Adrenal gland (tissue), 19 donors: ENCODE measurements at regions of chr10 and their contacts with region 1.

Region 1: GRCh38 chr10:103069453-103070331 is 123.4 kb downstream of the NT5C2 start:
- DNase-seq: peak; percentile 53 to 87 (median 75)
- H3K4me3 ChIP-seq: no peak overlapping the region
- H3K27ac ChIP-seq: no peak overlapping the region
- H3K4me1 ChIP-seq: no peaks in the 10 kb centered on the region
- H3K27me3 ChIP-seq: no peaks in the 10 kb centered on the region
- CTCF ChIP-seq: peak; percentile 34 to 77 (median 68)
- POLR2A ChIP-seq: no peak

Region 2: DNA sequence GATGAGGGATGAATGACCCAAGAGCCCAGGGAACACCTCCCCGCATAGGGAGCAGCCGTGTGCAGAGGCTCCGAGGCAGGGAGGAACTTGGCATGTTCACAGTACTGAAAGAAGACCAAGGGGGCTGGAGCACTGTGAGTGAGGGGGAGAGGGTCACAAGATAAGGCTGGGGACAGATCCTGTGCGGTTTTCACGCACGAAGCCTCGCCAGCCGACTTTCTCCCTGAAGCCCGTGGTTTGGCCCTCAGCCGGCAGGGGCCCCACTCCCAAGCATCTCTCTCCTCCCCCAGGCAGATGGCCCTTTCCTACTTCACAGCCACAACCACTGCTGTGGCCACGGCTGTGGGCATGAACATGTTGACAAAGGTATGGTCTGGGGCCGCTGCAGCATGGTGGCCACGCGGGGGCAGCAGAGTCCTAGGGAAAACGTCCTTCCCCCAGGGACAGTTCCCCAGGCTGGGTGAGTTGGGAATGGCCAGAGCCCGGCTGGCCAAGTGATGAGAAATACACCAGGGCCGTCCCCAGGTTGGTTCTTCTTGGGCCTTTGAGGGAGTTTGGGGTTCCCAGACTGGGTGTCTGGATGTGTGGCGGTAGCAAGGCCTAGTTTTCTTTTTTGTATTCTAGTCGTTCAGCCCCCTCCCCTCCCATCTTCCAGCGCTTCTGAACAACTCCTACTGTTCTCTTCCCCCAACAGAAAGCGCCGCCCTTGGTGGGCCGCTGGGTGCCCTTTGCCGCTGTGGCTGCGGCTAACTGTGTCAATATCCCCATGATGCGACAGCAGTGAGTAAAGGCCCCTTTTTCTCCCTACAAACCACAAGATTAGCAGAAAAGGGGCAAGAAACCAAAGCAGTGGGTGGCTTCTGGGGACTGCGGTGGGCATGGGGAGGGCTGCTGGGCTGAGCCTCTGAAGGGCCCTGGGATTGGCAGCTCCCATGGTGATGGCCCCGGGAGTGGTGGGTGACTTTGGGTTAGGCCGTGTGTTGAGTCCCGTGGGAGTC is 340.4 kb before region 1 on chr10:
- intact Hi-C with region 1: loop called in 1 of 2 experiments (anchors 10 kb)
- DNase-seq: peak; percentile 89 to 96 (median 93)
- H3K4me3 ChIP-seq: no peak overlapping the region
- H3K27ac ChIP-seq: peak overlapping the region in 1 of 5 donors; percentile 49
- H3K4me1 ChIP-seq: peaks cover 0 to 25% of the 10 kb centered on the region in 2 donors
- H3K27me3 ChIP-seq: no peaks in the 10 kb centered on the region
- CTCF ChIP-seq: peak; percentile 88 to 98 (median 94)
- POLR2A ChIP-seq: no peak

Region 3: DNA sequence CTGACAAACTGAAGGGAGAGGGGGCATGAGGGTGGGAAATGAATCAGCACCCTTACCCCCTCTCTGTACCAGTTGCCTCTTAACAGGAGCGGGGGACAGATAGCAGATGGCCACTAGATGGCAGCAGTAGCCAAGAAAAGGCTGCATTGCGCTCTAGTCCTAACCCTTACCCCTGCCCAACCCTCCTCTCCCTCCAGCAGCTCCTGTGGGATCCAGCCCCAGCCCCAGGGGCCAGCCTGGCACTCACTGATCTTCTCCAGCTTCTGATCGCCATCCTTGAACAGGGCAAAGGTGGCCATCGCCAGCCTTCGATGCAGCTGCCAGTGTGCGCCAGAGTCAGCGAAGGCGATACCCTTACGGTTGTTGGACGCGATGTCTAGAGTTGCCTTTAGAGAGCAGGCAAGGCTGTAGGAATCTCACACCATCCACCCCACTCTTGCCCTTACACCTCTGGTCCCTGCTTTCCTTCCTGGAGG is 234.6 kb before region 1 on chr10:
- intact Hi-C with region 1: loop called (anchors 10 kb)
- DNase-seq: peak; percentile 77 to 90 (median 81)
- H3K4me3 ChIP-seq: peak overlapping the region; percentile 12 to 69 (median 44)
- H3K27ac ChIP-seq: peak overlapping the region; percentile 59 to 92 (median 87)
- H3K4me1 ChIP-seq: peaks cover 0 to 10% of the 10 kb centered on the region in 2 donors
- H3K27me3 ChIP-seq: no peaks in the 10 kb centered on the region
- CTCF ChIP-seq: peak; percentile 45 to 92 (median 76)
- POLR2A ChIP-seq: peak; percentile 2 to 38

Region 4: DNA sequence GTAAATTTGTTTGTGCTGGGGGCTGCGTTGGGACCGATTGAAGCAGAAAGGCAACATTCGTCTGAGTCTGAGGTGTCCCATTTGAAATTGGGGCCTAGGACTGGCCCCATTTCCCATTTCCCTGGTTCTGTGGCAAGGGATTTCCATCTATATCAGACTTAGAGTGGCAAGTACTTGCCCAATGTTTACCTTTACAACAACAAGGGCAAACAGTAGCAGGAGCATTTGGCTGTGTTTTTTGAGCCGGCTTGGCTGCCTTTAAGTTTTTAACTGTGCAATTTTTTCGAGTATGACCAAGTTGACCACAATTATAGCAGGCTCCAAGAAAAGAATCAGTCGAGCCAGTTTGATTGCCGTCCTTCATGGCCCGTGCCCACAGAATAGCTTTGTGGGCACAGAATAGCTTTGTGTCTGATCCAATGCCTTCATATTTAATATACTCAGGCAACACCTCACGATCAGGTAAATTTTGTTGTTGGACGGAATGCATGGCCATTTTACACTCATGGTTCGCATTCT is 227.8 kb before region 1 on chr10:
- intact Hi-C with region 1: loop called (anchors 10 kb)
- DNase-seq: peak in 1 of 7 donors; percentile 29
- H3K4me3 ChIP-seq: no peak overlapping the region
- H3K27ac ChIP-seq: no peak overlapping the region
- H3K4me1 ChIP-seq: no peaks in the 10 kb centered on the region
- H3K27me3 ChIP-seq: no peaks in the 10 kb centered on the region
- CTCF ChIP-seq: no peak
- POLR2A ChIP-seq: no peak

Region 5: GRCh38 chr10:102917962-102918816 is 151.5 kb before region 1 on chr10 and contains the start of gene CNNM2:
- intact Hi-C with region 1: loop called (anchors 5 kb)
- DNase-seq: peak; percentile 100
- H3K4me3 ChIP-seq: peak within 1 kb of the TSS; percentile 44 to 88 (median 77)
- H3K27ac ChIP-seq: peak within 1 kb of the TSS; percentile 54 to 93 (median 89)
- H3K4me1 ChIP-seq: peaks cover 22 to 51% of the 10 kb centered on the region in 2 donors
- H3K27me3 ChIP-seq: no peaks in the 10 kb centered on the region
- CTCF ChIP-seq: peak in 1 of 6 experiments; percentile 1
- POLR2A ChIP-seq: peak; percentile 61 to 79
- total RNA-seq, gene CNNM2: 15.9 to 52.0 (median 40.7) TPM

Region 6: DNA sequence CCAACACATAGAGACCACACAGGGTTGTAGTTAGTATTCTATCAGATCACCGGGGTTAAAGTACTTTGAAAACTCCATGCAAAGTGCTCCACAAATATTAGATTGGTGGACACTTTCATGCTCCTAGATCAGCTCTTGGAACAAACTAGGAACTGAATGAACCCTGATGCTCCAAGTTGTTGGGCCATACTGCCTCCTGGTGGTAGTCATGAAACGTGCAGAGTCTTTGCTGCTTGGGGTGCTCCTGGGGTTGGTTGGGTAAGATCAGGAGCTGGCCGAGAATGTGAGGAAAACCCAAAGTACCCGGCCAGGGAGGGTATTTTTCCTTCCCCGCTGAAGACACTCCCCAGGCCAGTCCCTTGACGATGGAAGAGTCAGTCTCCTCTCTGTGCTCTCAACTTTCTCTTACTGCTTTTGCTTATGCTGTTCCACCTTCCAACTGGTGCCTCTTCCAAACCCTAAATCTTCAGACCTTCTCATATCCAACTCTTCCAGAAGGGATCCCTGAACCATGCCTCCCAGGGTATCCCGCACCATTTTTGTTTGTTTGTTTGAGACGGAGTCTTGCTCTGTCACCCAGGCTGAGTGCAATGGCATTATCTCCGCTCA is 175.1 kb after region 1 on chr10:
- intact Hi-C with region 1: loop called in 1 of 2 experiments (anchors 10 kb)
- DNase-seq: peak; percentile 76 to 93 (median 78)
- H3K4me3 ChIP-seq: no peak overlapping the region
- H3K27ac ChIP-seq: no peak overlapping the region
- H3K4me1 ChIP-seq: peaks cover 5 to 6% of the 10 kb centered on the region in 2 donors
- H3K27me3 ChIP-seq: no peaks in the 10 kb centered on the region
- CTCF ChIP-seq: peak; percentile 86 to 93 (median 92)
- POLR2A ChIP-seq: no peak

Region 7: DNA sequence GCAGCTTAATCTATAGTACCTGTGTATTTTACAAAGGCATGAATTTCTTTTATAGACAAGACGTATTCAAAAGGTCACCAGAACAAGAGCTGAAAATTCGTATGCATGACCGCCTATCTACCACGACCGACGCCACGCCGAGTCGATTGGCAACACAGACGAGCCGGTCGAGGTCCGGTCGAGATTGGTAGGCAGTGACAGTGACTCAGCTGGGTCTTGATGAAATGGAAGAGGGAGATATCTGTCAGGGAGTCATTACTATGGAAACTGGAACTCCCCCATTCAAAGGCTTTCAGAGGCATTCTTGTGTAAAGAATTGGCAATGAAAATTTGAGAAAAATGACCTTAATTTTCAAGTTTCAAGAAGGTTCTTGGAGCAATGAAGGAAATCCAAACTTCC is 324.5 kb after region 1 on chr10:
- intact Hi-C with region 1: no loop called
- DNase-seq: no peak
- H3K4me3 ChIP-seq: no peak overlapping the region
- H3K27ac ChIP-seq: no peak overlapping the region
- H3K4me1 ChIP-seq: peaks cover 20 to 39% of the 10 kb centered on the region in 2 donors
- H3K27me3 ChIP-seq: no peaks in the 10 kb centered on the region
- CTCF ChIP-seq: no peak
- POLR2A ChIP-seq: no peak